IMR-90 (cell line): ENCODE measurements at regions of chr4 and their contacts with region 1.

Region 1: DNA sequence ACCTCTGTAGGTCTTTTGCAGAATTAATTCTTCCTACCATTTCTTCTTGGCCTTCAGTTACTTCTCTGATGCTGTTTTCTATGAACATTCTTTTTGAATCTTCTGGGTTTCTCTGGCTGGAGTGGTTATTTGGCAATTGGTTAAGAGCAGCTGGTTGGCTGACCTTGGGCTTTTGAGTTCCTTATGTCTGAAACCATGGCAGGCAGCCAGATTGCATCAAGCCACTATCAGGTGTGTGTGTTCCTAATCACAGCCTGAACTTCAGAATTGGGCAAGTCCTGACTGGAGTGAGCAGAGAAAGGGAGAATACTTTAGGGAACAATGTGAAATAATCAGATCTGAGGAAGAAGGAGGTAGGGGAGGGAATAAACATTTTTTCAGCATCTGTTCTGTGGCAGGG is 90.2 kb downstream of the ARHGAP10 start:
- DNase-seq: peak; percentile 79
- ATAC-seq: peak; percentile 52; the same call in 1 of the 2 replicates
- H3K4me3 ChIP-seq: no peak overlapping the region
- H3K27ac ChIP-seq: no peak overlapping the region
- H3K4me1 ChIP-seq: peaks cover 14% of the 10 kb centered on the region
- H3K27me3 ChIP-seq: no peaks in the 10 kb centered on the region
- CTCF ChIP-seq: no peak
- POLR2A ChIP-seq: no peak
- RAD21 ChIP-seq: no peak

Region 2: DNA sequence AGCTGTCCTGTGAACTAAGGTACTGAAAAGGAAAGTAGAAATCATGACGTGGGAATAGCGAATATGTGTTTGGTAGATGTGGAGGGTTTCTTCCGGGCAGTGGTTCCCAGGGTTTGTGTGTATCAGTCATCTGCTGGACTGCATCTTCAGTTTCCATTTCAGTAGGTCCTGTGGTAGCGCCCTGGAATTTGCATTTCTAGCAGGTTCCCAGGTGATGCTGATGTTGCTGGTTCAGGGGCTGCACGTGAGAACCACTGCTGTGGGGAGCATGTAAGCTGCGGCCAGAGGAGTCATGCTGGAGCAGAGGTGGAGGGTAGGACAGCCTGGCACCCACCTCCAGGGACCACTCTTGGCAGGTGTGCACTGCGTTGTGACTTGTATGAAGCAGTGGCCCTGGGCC is 43.2 kb before region 1 on chr4:
- CTCF ChIA-PET with region 1: no interaction called
- POLR2A ChIA-PET with region 1: no interaction called
- dilution Hi-C with region 1: no loop called
- in situ Hi-C with region 1: no loop called
- intact Hi-C with region 1: loop called (anchors 5 kb)
- DNase-seq: no peak
- ATAC-seq: no peak
- H3K4me3 ChIP-seq: no peak overlapping the region
- H3K27ac ChIP-seq: no peak overlapping the region
- H3K4me1 ChIP-seq: peaks cover 25% of the 10 kb centered on the region
- H3K27me3 ChIP-seq: no peaks in the 10 kb centered on the region
- CTCF ChIP-seq: no peak
- POLR2A ChIP-seq: no peak
- RAD21 ChIP-seq: no peak